ENCODE measurements at regions of chr11 and their contacts with region 1.

Region 1: GRCh38 chr11:107549253-107549953 is 16.1 kb downstream of the ALKBH8 start:
- DNase-seq: peak; percentile 64
- H3K4me3 ChIP-seq: no peak overlapping the region
- H3K27ac ChIP-seq: no peak overlapping the region
- H3K4me1 ChIP-seq: peaks cover 18% of the 10 kb centered on the region
- H3K27me3 ChIP-seq: no peaks in the 10 kb centered on the region
- CTCF ChIP-seq: peak; percentile 61 to 64
- POLR2A ChIP-seq: no peak

Region 2: GRCh38 chr11:107427569-107428180 is 121.7 kb before region 1 on chr11:
- CTCF ChIA-PET with region 1: no interaction called
- POLR2A ChIA-PET with region 1: no interaction called
- dilution Hi-C with region 1: no loop called
- intact Hi-C with region 1: no loop called
- DNase-seq: peak; percentile 32
- H3K4me3 ChIP-seq: no peak overlapping the region
- H3K27ac ChIP-seq: no peak overlapping the region
- H3K4me1 ChIP-seq: no peaks in the 10 kb centered on the region
- H3K27me3 ChIP-seq: no peaks in the 10 kb centered on the region
- CTCF ChIP-seq: no peak
- POLR2A ChIP-seq: no peak

Region 3: GRCh38 chr11:107538821-107539220 is 10.6 kb before region 1 on chr11:
- CTCF ChIA-PET with region 1: interaction called, 25 read pairs
- POLR2A ChIA-PET with region 1: no interaction called
- dilution Hi-C with region 1: no loop called
- intact Hi-C with region 1: no loop called
- DNase-seq: peak; percentile 18
- H3K4me3 ChIP-seq: no peak overlapping the region
- H3K27ac ChIP-seq: no peak overlapping the region
- H3K4me1 ChIP-seq: peaks cover 1% of the 10 kb centered on the region
- H3K27me3 ChIP-seq: no peaks in the 10 kb centered on the region
- CTCF ChIP-seq: no peak
- POLR2A ChIP-seq: no peak

Region 4: DNA sequence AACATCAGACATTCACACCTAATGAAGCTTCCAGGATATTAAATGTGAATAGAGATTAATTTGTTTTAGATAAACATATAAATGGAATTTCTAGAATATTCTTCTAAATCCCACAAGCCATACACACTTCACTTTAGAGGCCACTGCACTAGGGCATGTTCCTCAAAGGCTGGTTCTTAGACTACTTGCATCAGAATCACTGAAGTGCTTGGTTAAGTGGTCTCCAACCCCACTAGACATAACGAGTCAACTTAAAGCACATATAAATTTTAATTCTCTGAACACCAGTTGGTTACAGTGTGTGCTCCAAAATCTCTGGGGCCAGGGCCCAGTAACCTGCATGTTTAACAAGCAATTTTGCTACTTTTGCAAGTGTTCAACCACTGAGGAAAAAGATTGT is 24.0 kb after region 1 on chr11:
- CTCF ChIA-PET with region 1: interaction called, 13 read pairs
- POLR2A ChIA-PET with region 1: no interaction called
- dilution Hi-C with region 1: no loop called
- intact Hi-C with region 1: loop called (anchors 1 kb)
- DNase-seq: no peak
- H3K4me3 ChIP-seq: no peak overlapping the region
- H3K27ac ChIP-seq: no peak overlapping the region
- H3K4me1 ChIP-seq: no peaks in the 10 kb centered on the region
- H3K27me3 ChIP-seq: no peaks in the 10 kb centered on the region
- CTCF ChIP-seq: no peak
- POLR2A ChIP-seq: no peak

Region 5: DNA sequence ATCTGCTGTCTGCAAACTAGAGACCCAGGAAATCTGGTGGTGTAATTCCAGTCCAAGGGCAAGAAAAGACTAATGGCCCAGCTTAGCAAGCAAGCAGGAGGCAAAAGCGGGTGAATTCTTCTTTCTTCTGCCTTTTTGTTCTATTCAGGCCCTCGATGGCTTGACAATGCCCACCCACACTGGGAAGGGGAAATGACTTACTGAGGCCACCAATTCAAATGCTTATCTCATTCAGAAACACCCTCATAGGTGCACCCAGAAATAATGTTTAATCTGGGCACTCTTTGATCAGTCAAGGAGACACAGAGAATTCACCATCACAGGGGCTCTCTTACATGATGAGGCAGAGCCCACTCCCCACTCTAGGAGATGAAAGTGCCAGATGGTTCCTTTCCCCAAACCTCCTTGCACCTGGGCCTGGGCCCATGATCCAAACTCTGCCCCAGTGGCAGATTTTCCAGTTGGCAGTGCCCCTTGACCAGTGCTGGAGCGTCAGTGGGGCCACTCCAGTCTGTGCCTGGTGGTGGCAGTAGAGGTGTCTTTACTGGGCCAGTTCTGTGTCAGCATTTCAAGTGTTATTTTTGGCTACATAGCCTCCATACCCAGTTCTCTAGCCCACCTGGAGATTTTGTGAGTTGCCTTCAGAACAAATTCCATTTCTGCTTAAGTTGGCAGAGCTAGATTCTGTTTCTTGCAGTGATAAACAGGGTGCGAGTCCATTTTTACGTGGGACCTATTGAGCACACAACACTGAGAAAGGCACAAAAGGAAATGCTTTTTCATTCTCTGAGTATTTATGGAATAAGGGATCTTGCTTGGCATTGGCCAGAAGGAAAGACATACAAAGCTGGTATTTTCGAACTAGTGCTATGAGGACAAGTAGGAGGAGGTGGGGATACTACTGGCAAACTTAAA is 49.1 kb after region 1 on chr11:
- CTCF ChIA-PET with region 1: interaction called, 10 read pairs
- POLR2A ChIA-PET with region 1: no interaction called
- dilution Hi-C with region 1: no loop called
- intact Hi-C with region 1: no loop called
- DNase-seq: peak; percentile 63
- H3K4me3 ChIP-seq: no peak overlapping the region
- H3K27ac ChIP-seq: no peak overlapping the region
- H3K4me1 ChIP-seq: no peaks in the 10 kb centered on the region
- H3K27me3 ChIP-seq: peaks cover 2 to 19% of the 10 kb centered on the region in 2 experiments
- CTCF ChIP-seq: peak; percentile 77 to 81
- POLR2A ChIP-seq: no peak

Region 6: DNA sequence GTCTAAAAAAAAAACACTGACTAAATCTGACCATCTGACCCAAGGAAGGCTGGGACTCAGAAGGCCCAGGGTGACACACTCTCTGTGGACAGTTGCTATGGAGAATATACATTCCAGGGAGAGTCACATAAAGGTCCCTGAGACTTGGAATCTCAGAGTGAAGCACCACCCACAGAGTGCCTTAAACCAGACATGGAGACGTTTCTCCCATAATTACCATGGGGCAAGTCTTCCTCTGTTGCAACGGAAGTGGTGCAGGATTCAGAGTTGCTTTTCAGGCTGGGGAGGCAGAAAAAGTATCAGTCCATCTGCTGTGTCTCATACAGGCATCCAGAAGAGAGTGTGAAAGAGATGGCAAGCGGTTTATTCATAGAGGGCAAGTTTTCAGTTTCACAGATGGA is 221.1 kb after region 1 on chr11:
- CTCF ChIA-PET with region 1: interaction called, 87 read pairs
- POLR2A ChIA-PET with region 1: no interaction called
- dilution Hi-C with region 1: no loop called
- intact Hi-C with region 1: loop called (anchors 1 kb)
- DNase-seq: no peak
- H3K4me3 ChIP-seq: no peak overlapping the region
- H3K27ac ChIP-seq: no peak overlapping the region
- H3K4me1 ChIP-seq: no peaks in the 10 kb centered on the region
- H3K27me3 ChIP-seq: peaks cover 2 to 4% of the 10 kb centered on the region in 2 experiments
- CTCF ChIP-seq: no peak
- POLR2A ChIP-seq: no peak

Measured in endothelial cell of umbilical vein (primary cell).